Activated naive CD4-positive, alpha-beta T cell treated with anti-CD3 and anti-CD28 coated beads for 36 hours (primary cell): ENCODE measurements at regions of chr5 and their contacts with region 1.

Region 1: DNA sequence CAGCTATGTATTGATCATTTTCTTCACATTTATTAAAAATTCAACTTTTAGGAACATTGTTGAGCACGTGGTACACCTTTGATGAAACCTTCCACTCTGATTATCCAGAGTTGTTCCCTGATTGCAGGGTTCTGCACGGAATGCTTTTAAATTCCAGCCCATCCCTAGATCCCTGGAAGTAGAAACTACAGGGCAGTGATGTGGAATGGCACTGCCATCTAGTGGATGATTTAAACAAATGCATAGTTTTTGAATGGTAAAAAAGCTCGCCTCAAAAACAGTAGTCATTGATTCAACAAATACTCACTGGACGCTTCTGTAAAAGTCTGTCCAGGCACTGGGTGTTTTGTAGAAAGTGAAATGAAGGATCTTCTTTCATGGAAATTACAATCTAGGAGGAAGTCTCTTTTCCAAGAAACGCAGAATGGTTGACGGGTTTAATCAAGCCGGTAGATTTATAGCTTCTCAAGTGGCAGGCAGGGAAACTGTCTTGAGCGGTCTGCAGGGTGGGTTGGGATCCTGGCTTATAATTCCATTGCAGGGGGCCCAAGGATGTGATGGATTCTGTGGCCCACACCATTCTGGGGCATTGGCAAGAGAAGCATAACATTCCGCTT is 118.4 kb downstream of the ARHGAP26 start:
- DNase-seq: peak; percentile 15
- H3K4me3 Mint-ChIP-seq: no peak overlapping the region
- H3K27ac Mint-ChIP-seq: no peak overlapping the region
- H3K4me1 Mint-ChIP-seq: no peaks in the 10 kb centered on the region
- H3K27me3 Mint-ChIP-seq: no peaks in the 10 kb centered on the region

Region 2: DNA sequence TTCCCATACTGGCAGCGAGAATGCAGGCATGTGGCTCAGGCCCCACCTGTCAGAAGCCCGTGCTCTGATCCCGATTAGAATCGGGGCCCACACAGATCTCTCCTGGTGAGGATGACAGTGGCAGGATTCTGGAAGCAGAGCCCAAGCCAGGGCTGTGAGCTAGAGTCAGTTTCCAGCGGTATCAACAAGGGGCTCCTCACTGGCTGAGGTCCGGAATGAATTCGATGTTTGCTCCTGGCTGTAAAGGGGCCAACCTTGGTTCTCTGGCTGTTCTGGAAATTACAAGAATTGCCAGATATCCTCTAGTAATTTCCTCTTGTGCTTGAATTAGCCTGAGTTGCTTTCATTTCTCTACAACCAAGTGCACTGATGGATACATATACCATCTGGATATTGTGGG is 434.6 kb before region 1 on chr5:
- CTCF ChIA-PET with region 1: no interaction called
- intact Hi-C with region 1: no loop called
- DNase-seq: no peak
- H3K4me3 Mint-ChIP-seq: no peak overlapping the region
- H3K27ac Mint-ChIP-seq: no peak overlapping the region
- H3K4me1 Mint-ChIP-seq: no peaks in the 10 kb centered on the region
- H3K27me3 Mint-ChIP-seq: no peaks in the 10 kb centered on the region

Region 3: DNA sequence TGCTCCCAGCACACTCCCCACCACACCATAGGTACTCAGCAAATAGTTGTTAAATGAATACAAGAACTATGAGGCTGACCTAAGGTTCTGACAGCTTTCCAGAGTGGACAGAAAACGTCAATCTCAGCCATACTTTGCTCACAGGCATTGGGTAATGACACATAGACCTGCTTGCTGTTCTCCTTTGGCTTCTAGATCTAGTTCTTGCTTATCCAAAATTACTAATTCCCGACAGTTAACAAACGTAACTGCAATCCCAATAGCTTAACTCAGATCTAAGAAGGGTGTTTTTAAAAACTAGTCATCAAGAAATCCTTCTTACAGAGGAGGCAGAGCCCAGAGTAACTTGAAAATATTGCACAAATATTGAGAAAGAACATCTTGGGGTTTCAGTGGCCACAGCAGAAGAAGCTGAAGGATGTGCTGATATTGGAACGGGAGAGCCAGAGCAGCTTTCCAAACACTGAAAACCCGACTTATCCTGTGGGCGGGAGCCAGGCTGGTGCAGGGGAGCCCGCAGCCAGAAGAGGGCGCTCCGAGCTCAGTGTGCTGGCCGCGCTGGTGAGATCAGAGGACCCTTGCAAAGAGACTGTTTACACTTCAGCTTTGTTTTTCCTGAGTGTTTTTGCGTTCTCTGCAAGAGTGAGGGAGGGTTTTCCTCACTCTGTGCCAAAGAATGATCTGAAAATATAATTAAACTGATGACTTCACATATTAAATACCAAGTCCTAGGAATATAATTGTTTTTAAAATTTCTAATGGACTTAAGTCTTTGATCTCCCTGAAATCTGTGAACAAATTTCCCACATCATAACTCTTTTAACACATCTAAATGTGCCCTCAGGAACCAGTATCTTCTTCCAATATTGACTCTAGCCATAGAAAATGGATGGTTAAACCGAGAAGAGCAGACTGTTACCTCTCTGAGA is 233.0 kb before region 1 on chr5:
- CTCF ChIA-PET with region 1: interaction called, 7 read pairs
- intact Hi-C with region 1: loop called (anchors 2 kb)
- DNase-seq: peak; percentile 77
- H3K4me3 Mint-ChIP-seq: no peak overlapping the region
- H3K27ac Mint-ChIP-seq: no peak overlapping the region
- H3K4me1 Mint-ChIP-seq: no peaks in the 10 kb centered on the region
- H3K27me3 Mint-ChIP-seq: peaks cover 5% of the 10 kb centered on the region

Region 4: DNA sequence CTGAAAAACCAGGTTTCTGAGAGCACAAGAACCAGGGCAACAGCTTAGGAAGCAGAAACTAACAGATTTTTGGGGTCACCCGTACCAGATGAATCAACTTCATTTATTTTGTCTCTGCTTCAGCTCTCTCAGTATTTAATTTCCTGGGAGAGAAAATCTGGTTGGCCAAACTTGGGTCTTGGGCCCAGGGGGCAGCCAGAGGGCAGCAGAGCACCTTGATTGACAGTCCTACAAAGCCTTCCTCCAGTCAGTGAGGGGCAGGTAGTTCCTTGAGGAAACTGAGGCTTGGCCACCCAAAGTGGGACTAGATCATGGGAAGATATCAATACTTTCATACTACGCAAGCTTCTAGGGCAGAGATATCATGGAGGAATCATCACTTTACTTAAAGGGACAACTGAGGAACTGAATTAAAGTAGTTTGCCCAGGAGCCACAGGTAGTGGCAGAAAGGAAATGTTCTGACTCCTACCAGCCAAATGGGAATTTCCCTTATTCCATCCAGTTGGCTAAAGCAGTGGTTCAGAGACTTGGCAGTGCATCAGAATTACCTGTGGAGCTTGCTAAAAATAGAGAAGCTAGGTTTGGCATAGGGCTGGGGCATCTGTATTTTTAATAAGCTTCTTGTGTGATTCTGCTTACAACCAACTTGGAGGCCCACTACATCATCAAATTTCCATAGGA is 139.9 kb before region 1 on chr5:
- CTCF ChIA-PET with region 1: interaction called, 163 read pairs
- intact Hi-C with region 1: loop called (anchors 1 kb)
- DNase-seq: peak; percentile 76
- H3K4me3 Mint-ChIP-seq: no peak overlapping the region
- H3K27ac Mint-ChIP-seq: no peak overlapping the region
- H3K4me1 Mint-ChIP-seq: peaks cover 13% of the 10 kb centered on the region
- H3K27me3 Mint-ChIP-seq: no peaks in the 10 kb centered on the region

Region 5: DNA sequence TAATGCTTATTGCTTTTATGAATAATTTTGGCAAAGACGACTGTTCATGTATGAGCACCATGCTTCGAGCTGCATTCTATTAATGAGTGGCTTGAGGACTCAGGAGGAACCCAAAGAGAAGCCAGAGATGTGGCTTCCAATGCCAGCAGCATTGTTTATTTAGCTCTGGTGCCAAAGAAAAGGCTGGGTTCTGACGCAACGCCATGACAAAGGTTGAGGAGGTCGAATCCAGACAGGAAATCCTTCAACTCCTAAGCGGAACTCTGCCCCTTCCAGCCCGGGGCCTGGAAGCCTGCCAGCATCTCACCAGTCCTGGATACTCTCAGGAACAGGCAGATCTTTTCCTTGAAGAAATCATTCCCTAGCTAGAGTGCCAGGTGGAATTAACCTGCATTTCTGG is 14.0 kb before region 1 on chr5:
- CTCF ChIA-PET with region 1: interaction called, 21 read pairs
- intact Hi-C with region 1: no loop called
- DNase-seq: no peak
- H3K4me3 Mint-ChIP-seq: no peak overlapping the region
- H3K27ac Mint-ChIP-seq: no peak overlapping the region
- H3K4me1 Mint-ChIP-seq: peaks cover 3% of the 10 kb centered on the region
- H3K27me3 Mint-ChIP-seq: no peaks in the 10 kb centered on the region

Region 6: GRCh38 chr5:143564417-143564816 is 675.8 kb after region 1 on chr5:
- CTCF ChIA-PET with region 1: no interaction called
- intact Hi-C with region 1: no loop called
- DNase-seq: no peak
- H3K4me3 Mint-ChIP-seq: no peak overlapping the region
- H3K27ac Mint-ChIP-seq: no peak overlapping the region
- H3K4me1 Mint-ChIP-seq: peaks cover 4% of the 10 kb centered on the region
- H3K27me3 Mint-ChIP-seq: no peaks in the 10 kb centered on the region